GM12878 (cell line): ENCODE measurements at regions of chr5 and their contacts with region 1.

Region 1: GRCh38 chr5:72451741-72452505 is 55.3 kb downstream of the ZNF366 start:
- DNase-seq: peak; percentile 75
- ATAC-seq: peak; percentile 94
- H3K4me3 ChIP-seq: no peak overlapping the region
- H3K27ac ChIP-seq: peak overlapping the region; percentile 76
- H3K4me1 ChIP-seq: peaks cover 12% of the 10 kb centered on the region
- H3K27me3 ChIP-seq: no peaks in the 10 kb centered on the region
- CTCF ChIP-seq: no peak
- EP300 ChIP-seq: peak in 1 of 2 experiments; percentile 9; a peak in 1 of 4 replicates
- POLR2A ChIP-seq: no peak
- RAD21 ChIP-seq: no peak

Region 2: DNA sequence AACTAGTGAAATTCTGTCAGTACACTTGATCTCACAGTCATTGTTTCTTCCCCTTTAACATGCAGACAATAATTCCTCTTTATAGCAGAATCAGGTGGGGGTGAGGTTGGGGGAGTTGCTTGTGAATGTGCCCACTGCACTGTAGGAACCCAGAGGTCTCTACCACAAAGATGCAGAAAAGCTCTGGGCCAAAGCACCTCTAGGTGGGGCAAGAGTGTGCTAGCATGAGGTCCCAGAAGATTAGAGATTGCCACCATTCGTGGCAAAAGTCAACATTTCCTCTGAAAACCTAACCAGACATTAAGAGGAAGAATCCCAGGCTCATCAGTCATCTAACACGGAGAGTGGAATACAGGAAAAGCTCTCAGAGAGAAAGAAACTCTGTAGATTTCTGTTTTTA is 57.2 kb before region 1 on chr5:
- CTCF ChIA-PET with region 1: interaction called, 4 read pairs
- POLR2A ChIA-PET with region 1: interaction called, 4 read pairs
- RAD21 ChIA-PET with region 1: interaction called, 5 read pairs
- SMC1A ChIA-PET with region 1: interaction called, 3 read pairs
- in situ Hi-C with region 1: no loop called
- intact Hi-C with region 1: loop called (anchors 5 kb)
- DNase-seq: no peak
- ATAC-seq: peak; percentile 89
- H3K4me3 ChIP-seq: no peak overlapping the region
- H3K27ac ChIP-seq: no peak overlapping the region
- H3K4me1 ChIP-seq: no peaks in the 10 kb centered on the region
- H3K27me3 ChIP-seq: no peaks in the 10 kb centered on the region
- CTCF ChIP-seq: peak; percentile 70 to 74 (median 74)
- EP300 ChIP-seq: no peak
- POLR2A ChIP-seq: no peak
- RAD21 ChIP-seq: peak; percentile 84

Region 3: GRCh38 chr5:72472666-72473422 is 20.9 kb after region 1 on chr5:
- CTCF ChIA-PET with region 1: interaction called, 5 read pairs
- POLR2A ChIA-PET with region 1: interaction called, 6 read pairs
- RAD21 ChIA-PET with region 1: interaction called, 13 read pairs
- SMC1A ChIA-PET with region 1: interaction called, 141 read pairs
- in situ Hi-C with region 1: no loop called
- intact Hi-C with region 1: no loop called
- DNase-seq: no peak
- ATAC-seq: no peak
- H3K4me3 ChIP-seq: no peak overlapping the region
- H3K27ac ChIP-seq: peak overlapping the region; percentile 70
- H3K4me1 ChIP-seq: peaks cover 74% of the 10 kb centered on the region
- H3K27me3 ChIP-seq: no peaks in the 10 kb centered on the region
- CTCF ChIP-seq: no peak
- EP300 ChIP-seq: no peak
- POLR2A ChIP-seq: no peak
- RAD21 ChIP-seq: no peak